ENCODE measurements at regions of chr5 and their contacts with region 1.

Region 1: DNA sequence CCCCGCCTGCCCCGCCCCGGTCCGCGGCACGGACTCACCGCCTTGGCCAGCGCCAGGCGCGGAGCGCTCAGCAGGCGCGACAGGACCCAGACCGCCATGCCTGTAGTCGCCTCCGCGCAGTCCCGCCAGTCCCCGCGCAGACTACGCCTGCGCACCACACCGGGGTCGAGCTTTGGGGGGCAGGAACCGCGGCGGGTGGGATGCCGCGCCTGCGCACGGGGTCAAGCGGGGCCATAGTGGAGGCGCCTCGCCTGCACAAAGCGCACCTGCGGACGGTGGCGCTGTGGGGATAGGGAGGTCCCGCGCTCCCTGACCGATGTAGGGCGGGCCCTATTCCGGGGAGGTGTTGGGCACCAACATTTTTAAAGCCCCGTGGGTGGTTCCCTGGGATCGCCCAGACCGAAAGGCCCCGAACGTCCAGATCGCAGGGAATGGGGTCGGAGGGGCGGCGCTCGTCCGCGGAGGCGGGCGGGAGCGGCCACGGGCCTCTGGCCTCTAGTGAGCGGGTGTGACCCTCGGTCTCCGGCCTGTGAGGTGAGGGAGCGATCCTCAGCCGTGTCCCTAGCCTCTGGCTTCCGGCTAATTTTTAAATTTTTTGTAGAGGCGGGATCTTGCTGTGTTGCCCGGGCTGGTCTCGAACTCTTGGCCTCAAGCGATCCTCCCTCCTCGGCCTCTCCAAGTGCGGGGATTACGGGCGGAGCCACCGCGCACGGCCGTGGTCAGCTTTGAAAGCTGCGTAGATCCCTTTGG is 70.8 kb upstream of the LPCAT1 start:
- DNase-seq: peak in 9 of 10 donors; percentile 40 to 80 (median 69)
- H3K4me3 ChIP-seq: peak overlapping the region; percentile 31 to 76 (median 62)
- H3K27ac ChIP-seq: peak overlapping the region in 48 of 59 donors; percentile 22 to 86 (median 66)
- H3K27me3 ChIP-seq: peaks cover 0 to 7% (median 0%) of the 10 kb centered on the region in 45 donors
- CTCF ChIP-seq: peak in 43 of 56 donors; percentile 7 to 46 (median 30)

Region 2: GRCh38 chr5:231661-232060 is 1362.9 kb before region 1 on chr5:
- intact Hi-C with region 1: loop called in 1 of 2 experiments (anchors 5 kb)
- DNase-seq: peak in 4 of 10 donors; percentile 45 to 63 (median 54)
- H3K4me3 ChIP-seq: peak overlapping the region in 1 of 59 donors; percentile 20
- H3K27ac ChIP-seq: peak overlapping the region in 26 of 59 donors; percentile 4 to 82 (median 55)
- H3K27me3 ChIP-seq: no peaks in the 10 kb centered on the region
- CTCF ChIP-seq: no peak

Region 3: GRCh38 chr5:1392801-1393565 is 201.5 kb before region 1 on chr5:
- intact Hi-C with region 1: no loop called
- DNase-seq: no peak
- H3K4me3 ChIP-seq: no peak overlapping the region
- H3K27ac ChIP-seq: no peak overlapping the region
- H3K27me3 ChIP-seq: peaks cover 0 to 32% (median 5%) of the 10 kb centered on the region in 45 donors
- CTCF ChIP-seq: no peak

Region 4: GRCh38 chr5:1414236-1415058 is 180.1 kb before region 1 on chr5:
- intact Hi-C with region 1: no loop called
- DNase-seq: peak in 1 of 10 donors; percentile 43
- H3K4me3 ChIP-seq: no peak overlapping the region
- H3K27ac ChIP-seq: no peak overlapping the region
- H3K27me3 ChIP-seq: peaks cover 0 to 22% (median 0%) of the 10 kb centered on the region in 45 donors
- CTCF ChIP-seq: no peak

Region 5: DNA sequence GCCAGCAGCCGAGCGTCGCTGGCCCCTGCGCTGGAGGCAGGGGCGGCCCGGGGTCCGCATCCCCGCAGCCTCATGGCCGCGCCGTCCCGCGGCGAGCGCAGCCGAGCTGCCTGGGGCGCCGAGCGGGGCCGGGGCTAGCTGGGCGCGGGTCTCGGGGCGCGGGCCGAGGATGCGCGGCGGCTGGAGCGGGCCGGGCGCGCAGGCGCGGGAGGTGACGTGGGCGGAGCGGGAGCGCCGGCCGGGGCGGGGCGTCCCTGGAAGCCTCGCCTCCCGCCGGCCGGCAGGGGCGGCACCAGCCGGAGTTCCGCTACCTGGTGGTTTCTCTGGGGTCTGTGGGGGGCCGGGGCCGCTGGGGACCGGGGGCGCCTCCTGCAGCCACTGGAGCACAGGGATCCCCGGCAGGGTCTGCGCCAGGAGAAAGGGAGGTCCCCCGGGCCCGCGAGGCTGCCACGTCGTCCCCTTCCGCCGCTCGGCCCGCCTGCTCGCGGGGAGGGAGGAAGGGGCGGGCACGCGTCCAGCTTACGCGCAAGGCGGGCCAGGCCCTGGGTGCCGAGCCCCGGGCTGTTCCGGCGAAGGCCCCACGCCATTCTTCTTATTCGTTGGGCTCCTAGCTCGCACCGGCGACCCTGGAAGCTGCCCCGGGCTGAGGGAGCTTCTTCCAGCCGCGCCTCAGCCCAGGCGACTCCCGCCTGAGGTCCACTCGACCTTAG is 70.6 kb before region 1 on chr5 and contains the start of gene LPCAT1:
- intact Hi-C with region 1: loop called in 1 of 2 experiments (anchors 10 kb)
- DNase-seq: peak; percentile 38 to 89 (median 61)
- H3K4me3 ChIP-seq: peak within 1 kb of the TSS; percentile 55 to 89 (median 76)
- H3K27ac ChIP-seq: peak within 1 kb of the TSS in 51 of 59 donors; percentile 8 to 92 (median 73)
- H3K27me3 ChIP-seq: no peaks in the 10 kb centered on the region
- CTCF ChIP-seq: peak in 37 of 56 donors; percentile 9 to 52 (median 28)
- total RNA-seq, gene LPCAT1: 24.4 to 66.5 (median 41.3) TPM